ENCODE measurements at regions of chr18 and their contacts with region 1.

Region 1: DNA sequence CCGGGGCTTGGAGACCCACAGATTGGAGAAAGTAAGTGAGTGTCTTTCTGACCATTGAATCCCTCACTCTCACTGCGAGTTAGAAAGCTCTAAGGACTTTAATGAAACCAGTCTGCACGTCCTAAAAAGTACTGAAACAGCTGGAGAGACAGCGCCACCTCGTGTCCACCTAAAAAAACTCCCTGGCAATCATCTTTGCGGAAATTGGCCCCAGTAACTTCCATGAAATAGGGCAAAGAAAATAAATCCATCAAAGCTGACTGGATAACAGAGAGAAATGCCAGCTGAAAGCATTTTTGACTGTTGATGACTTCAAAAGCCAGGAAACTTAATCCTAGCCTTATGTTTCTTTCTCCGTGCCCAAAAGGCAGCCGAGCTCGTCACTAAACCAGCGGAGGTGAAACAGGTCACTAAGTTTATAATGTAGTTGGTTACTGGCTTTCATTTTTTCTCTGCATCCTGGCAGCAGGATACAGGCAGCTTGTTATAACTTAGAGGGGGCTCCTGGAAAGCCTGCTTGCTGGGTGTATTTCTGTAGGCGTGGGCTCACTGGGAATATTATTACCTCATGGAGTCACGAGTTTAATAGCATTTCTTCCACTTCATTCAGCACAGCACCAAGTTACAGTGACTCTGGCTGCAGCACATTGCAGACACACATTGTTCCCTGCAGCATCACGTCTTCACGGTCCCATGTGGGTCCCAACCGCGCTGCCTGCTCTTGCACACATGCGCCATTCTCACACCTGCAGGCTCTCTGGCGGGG is 266.5 kb downstream of the HRH4 start:
- DNase-seq: peak in 4 of 5 donors; percentile 43 to 46 (median 43)
- H3K4me3 ChIP-seq: no peak overlapping the region
- H3K4me3 Mint-ChIP-seq: no peak overlapping the region
- H3K27ac ChIP-seq: no peak overlapping the region
- H3K27ac Mint-ChIP-seq: no peak overlapping the region
- H3K4me1 ChIP-seq: no peaks in the 10 kb centered on the region
- H3K4me1 Mint-ChIP-seq: peaks cover 0 to 3% (median 2%) of the 10 kb centered on the region in 4 donors
- H3K27me3 ChIP-seq: no peaks in the 10 kb centered on the region
- H3K27me3 Mint-ChIP-seq: peaks cover 6 to 11% of the 10 kb centered on the region in 2 donors

Region 2: DNA sequence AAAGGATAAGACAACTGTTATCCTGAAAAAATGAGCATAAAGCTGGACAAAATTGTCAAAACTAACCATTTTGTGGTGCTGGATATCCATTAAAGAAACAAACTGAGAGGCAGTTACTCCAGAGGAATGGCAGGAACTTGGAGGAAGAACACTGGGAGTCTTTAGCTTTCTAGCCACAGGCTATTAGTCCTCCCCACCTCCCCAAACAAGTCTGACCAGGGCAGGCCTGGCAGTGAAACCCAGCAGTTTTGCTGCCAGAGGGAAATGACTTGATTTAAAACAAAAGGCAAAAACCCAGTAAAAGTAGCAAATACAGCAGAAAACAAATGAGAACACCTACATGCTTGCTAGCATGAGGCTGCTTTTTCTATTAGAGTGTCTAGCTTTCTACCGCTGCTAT is 364.2 kb before region 1 on chr18:
- CTCF ChIA-PET with region 1: interaction called, 24 read pairs
- POLR2A ChIA-PET with region 1: no interaction called
- intact Hi-C with region 1: no loop called
- DNase-seq: no peak
- H3K4me3 ChIP-seq: no peak overlapping the region
- H3K4me3 Mint-ChIP-seq: no peak overlapping the region
- H3K27ac ChIP-seq: no peak overlapping the region
- H3K27ac Mint-ChIP-seq: no peak overlapping the region
- H3K4me1 ChIP-seq: no peaks in the 10 kb centered on the region
- H3K4me1 Mint-ChIP-seq: no peaks in the 10 kb centered on the region
- H3K27me3 ChIP-seq: no peaks in the 10 kb centered on the region
- H3K27me3 Mint-ChIP-seq: no peaks in the 10 kb centered on the region

Region 3: GRCh38 chr18:24514439-24514838 is 212.5 kb before region 1 on chr18:
- CTCF ChIA-PET with region 1: interaction called, 10 read pairs
- POLR2A ChIA-PET with region 1: no interaction called
- intact Hi-C with region 1: no loop called
- DNase-seq: peak in 4 of 5 donors; percentile 4 to 18 (median 10)
- H3K4me3 ChIP-seq: no peak overlapping the region
- H3K4me3 Mint-ChIP-seq: no peak overlapping the region
- H3K27ac ChIP-seq: no peak overlapping the region
- H3K27ac Mint-ChIP-seq: no peak overlapping the region
- H3K4me1 ChIP-seq: no peaks in the 10 kb centered on the region
- H3K4me1 Mint-ChIP-seq: no peaks in the 10 kb centered on the region
- H3K27me3 ChIP-seq: no peaks in the 10 kb centered on the region
- H3K27me3 Mint-ChIP-seq: no peaks in the 10 kb centered on the region

Region 4: GRCh38 chr18:24600076-24600654 is 126.7 kb before region 1 on chr18:
- CTCF ChIA-PET with region 1: interaction called, 38 read pairs
- POLR2A ChIA-PET with region 1: no interaction called
- intact Hi-C with region 1: no loop called
- DNase-seq: peak in 3 of 5 donors; percentile 4 to 19 (median 17)
- H3K4me3 ChIP-seq: no peak overlapping the region
- H3K4me3 Mint-ChIP-seq: no peak overlapping the region
- H3K27ac ChIP-seq: no peak overlapping the region
- H3K27ac Mint-ChIP-seq: no peak overlapping the region
- H3K4me1 ChIP-seq: no peaks in the 10 kb centered on the region
- H3K4me1 Mint-ChIP-seq: no peaks in the 10 kb centered on the region
- H3K27me3 ChIP-seq: no peaks in the 10 kb centered on the region
- H3K27me3 Mint-ChIP-seq: peaks cover 7 to 8% of the 10 kb centered on the region in 2 donors

Region 5: DNA sequence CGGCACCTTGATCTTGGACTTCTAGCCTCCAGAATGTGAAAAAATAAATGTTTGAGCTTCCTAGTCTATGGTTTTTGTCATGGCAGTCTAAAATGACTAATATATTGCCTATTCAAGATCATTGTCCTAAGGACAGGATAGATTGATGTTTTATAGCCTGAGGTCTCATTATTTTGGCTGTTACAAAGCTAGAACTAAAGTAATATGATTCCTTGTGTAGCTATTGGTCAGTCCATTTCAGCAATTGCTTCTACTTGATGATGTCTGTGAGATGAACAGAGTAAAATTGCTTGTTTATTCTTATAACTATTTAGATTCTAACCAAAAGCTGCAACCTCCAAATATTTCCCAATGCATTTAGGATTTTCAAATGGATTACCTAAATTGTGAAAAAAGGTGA is 121.5 kb before region 1 on chr18:
- CTCF ChIA-PET with region 1: interaction called, 38 read pairs
- POLR2A ChIA-PET with region 1: no interaction called
- intact Hi-C with region 1: no loop called
- DNase-seq: no peak
- H3K4me3 ChIP-seq: no peak overlapping the region
- H3K4me3 Mint-ChIP-seq: no peak overlapping the region
- H3K27ac ChIP-seq: no peak overlapping the region
- H3K27ac Mint-ChIP-seq: no peak overlapping the region
- H3K4me1 ChIP-seq: no peaks in the 10 kb centered on the region
- H3K4me1 Mint-ChIP-seq: no peaks in the 10 kb centered on the region
- H3K27me3 ChIP-seq: no peaks in the 10 kb centered on the region
- H3K27me3 Mint-ChIP-seq: peaks cover 4 to 12% of the 10 kb centered on the region in 2 donors

Region 6: GRCh38 chr18:24710474-24710873 is 16.4 kb before region 1 on chr18:
- CTCF ChIA-PET with region 1: no interaction called
- POLR2A ChIA-PET with region 1: no interaction called
- intact Hi-C with region 1: no loop called
- DNase-seq: no peak
- H3K4me3 ChIP-seq: no peak overlapping the region
- H3K4me3 Mint-ChIP-seq: no peak overlapping the region
- H3K27ac ChIP-seq: no peak overlapping the region
- H3K27ac Mint-ChIP-seq: no peak overlapping the region
- H3K4me1 ChIP-seq: no peaks in the 10 kb centered on the region
- H3K4me1 Mint-ChIP-seq: no peaks in the 10 kb centered on the region
- H3K27me3 ChIP-seq: no peaks in the 10 kb centered on the region
- H3K27me3 Mint-ChIP-seq: no peaks in the 10 kb centered on the region